ENCODE measurements at regions of chr3 and their contacts with region 1.

Region 1: DNA sequence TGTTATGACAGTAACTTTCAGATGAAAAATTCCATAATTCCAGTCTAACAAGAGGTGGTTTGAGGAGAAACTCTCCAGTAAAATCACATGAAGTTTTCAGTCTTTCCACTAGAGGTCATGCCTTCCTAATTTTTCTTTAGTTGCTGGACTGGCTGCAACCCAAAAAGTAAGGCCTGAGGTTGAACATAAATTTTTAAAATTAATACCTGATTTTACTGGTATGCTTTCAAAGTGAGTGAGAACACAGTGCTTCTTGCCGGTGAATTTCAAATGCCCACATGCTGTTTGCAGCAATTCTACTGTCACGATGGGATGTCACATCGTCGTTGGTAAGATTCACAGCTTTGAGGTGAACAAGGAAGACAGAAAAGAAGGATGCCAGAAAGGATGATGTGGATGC is 89.0 kb upstream of the FGF12 start:
- DNase-seq: peak in 1 of 2 donors; percentile 72
- H3K4me3 ChIP-seq: no peak overlapping the region
- H3K27ac ChIP-seq: no peak overlapping the region
- H3K4me1 ChIP-seq: peaks cover 0 to 28% (median 15%) of the 10 kb centered on the region in 4 donors
- H3K27me3 ChIP-seq: no peaks in the 10 kb centered on the region
- CTCF ChIP-seq: peak in 5 of 7 experiments; percentile 41 to 68 (median 57)
- EP300 ChIP-seq: no peak
- POLR2A ChIP-seq: no peak

Region 2: DNA sequence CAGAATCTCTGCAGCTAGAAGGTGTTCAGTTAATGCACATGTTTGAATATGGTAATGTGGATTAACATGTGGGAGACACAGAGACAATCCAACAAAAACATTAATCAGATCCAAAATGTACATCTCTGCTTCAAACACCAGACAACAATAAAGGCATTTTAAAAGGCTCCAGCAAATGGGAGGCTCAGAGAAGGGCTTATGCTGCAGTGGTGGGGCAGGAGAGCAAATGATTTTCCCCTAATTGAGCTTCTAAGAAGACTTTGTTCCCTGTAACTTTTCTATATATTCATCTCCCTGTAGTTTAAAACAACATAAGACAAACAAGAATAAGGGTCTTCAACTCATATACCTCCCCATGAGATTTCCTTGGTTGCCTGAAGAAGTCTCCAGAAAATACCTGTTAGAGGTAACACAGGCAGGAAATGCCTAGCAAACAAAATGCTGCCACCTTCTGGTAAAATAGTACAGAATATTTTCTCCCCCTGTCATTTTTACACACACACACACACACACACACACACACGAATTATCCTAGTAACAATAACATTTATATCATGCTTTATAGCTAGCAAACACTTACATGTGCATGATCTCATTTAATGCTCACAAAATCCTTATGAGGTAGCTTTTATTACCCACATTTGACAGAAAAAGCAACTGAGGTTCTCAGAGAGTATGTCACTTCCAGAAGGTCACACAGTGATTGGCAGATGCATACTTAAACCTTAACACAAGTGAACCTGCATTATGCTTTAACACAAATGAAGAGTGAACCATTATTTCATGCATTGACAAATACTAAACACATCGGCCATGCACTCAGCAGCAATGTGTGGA is 224.7 kb after region 1 on chr3:
- intact Hi-C with region 1: loop called (anchors 5 kb)
- DNase-seq: peak in 1 of 2 donors; percentile 61
- H3K4me3 ChIP-seq: no peak overlapping the region
- H3K27ac ChIP-seq: no peak overlapping the region
- H3K4me1 ChIP-seq: no peaks in the 10 kb centered on the region
- H3K27me3 ChIP-seq: no peaks in the 10 kb centered on the region
- CTCF ChIP-seq: peak in 5 of 7 experiments; percentile 16 to 81 (median 37)
- EP300 ChIP-seq: no peak
- POLR2A ChIP-seq: no peak

Region 3: DNA sequence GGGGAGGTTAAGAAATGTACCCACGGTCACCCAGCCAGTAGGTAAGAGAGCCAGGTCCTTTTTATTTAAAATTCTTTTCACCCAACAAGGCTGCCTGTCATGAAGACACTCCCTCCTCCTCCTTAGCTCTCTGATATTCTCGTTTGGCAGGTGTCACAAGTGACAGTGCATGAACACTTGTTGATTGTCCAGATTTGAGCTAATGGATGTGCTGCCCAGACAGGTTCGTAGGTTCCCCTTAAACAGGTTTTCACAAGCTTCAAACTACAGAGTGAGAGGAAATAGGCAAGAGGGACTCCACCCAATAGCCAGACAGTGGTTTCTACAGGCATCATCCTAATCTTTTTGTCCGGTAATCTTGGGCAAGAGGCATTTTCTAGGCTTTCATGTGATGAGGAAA is 706.1 kb after region 1 on chr3:
- intact Hi-C with region 1: no loop called
- DNase-seq: no peak
- H3K4me3 ChIP-seq: no peak overlapping the region
- H3K27ac ChIP-seq: no peak overlapping the region
- H3K4me1 ChIP-seq: no peaks in the 10 kb centered on the region
- H3K27me3 ChIP-seq: no peaks in the 10 kb centered on the region
- CTCF ChIP-seq: no peak
- EP300 ChIP-seq: no peak
- POLR2A ChIP-seq: no peak

Region 4: DNA sequence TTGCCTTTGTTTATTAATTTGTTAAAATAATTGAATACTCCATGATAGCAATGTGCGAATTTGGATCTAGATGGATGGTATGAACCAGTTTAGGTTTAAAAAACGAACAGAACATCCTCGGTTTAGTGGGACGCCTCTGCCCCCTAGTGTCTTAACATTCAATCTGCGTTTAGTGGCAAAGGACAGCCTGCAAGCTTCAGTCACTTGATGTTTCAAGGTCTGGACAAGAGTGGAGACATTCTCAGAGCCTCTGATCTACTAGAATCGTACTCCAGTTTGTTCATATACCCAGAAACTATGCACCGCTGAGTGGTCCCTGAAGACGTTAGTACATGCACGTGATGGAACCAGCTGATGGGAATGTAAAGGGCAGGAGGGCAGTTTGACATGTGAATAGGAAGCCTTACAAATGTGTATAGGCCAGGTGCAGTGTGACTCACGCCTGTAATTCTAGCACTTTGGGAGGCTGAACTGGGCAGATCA is 756.1 kb after region 1 on chr3:
- intact Hi-C with region 1: loop called (anchors 10 kb)
- DNase-seq: peak; percentile 62 to 88
- H3K4me3 ChIP-seq: no peak overlapping the region
- H3K27ac ChIP-seq: no peak overlapping the region
- H3K4me1 ChIP-seq: no peaks in the 10 kb centered on the region
- H3K27me3 ChIP-seq: no peaks in the 10 kb centered on the region
- CTCF ChIP-seq: peak in 5 of 7 experiments; percentile 48 to 80 (median 63)
- EP300 ChIP-seq: no peak
- POLR2A ChIP-seq: no peak